H1 (cell line): ENCODE measurements at regions of chr7 and their contacts with region 1.

Region 1: GRCh38 chr7:1086588-1087464 is 1.1 kb upstream of the GPER1 start:
- DNase-seq: peak; percentile 57 to 93
- H3K4me3 ChIP-seq: peak overlapping the region in 3 of 4 experiments; percentile 18 to 51 (median 43); a peak in 5 of 8 replicates
- H3K27ac ChIP-seq: no peak overlapping the region
- H3K4me1 ChIP-seq: peaks cover 2 to 19% (median 4%) of the 10 kb centered on the region in 4 experiments
- H3K27me3 ChIP-seq: no peaks in the 10 kb centered on the region
- CTCF ChIP-seq: peak in 2 of 3 experiments; percentile 71 to 88; a peak in 3 of 4 replicates
- EP300 ChIP-seq: no peak
- POLR2A ChIP-seq: no peak
- RAD21 ChIP-seq: peak; percentile 40 to 55

Region 2: GRCh38 chr7:1103009-1103788 is 16.4 kb after region 1 on chr7:
- CTCF ChIA-PET with region 1: interaction called, 12 read pairs
- POLR2A ChIA-PET with region 1: interaction called, 4 read pairs
- DNase-seq: no peak
- H3K4me3 ChIP-seq: no peak overlapping the region
- H3K27ac ChIP-seq: no peak overlapping the region
- H3K4me1 ChIP-seq: no peaks in the 10 kb centered on the region
- H3K27me3 ChIP-seq: no peaks in the 10 kb centered on the region
- CTCF ChIP-seq: no peak
- EP300 ChIP-seq: no peak
- POLR2A ChIP-seq: no peak
- RAD21 ChIP-seq: no peak